ENCODE measurements at regions of chr1 and their contacts with region 1.

Region 1: DNA sequence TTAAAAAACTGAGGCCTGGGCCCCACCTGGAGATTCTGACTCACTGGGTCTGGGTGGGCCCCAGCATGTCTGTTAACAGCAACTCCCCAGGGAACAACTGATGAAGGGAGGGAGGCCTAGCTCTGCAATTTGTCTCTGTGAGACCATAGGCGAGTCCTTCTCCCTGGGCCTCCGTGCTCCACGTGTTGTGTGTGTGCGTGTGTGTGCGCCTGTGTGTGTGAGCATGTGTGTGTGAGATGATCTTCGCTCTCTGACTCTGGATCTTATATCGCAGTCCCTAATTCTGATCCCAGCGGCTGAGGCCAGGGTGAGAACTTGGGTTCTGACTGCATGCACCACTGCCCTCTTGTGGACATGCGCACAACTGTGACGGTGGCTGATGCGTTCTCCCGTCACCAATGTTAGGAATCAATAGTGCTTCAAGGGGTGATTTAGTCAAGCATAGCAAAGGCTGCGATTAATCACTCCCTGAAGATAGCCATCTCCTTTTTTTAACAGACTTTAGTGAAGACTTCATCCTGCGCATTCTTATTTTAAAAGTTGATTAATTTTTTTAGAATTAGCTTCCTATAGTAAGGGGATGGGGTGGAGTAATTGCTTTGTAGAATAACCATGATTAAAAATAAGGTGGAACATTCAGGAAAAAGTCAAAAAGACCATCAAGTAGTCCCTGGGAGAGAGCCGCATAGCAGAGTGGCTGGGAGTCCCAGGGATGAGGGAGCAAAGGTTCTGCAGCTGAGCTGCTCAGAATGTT is 62.4 kb upstream of the USP24 start:
- DNase-seq: peak; percentile 68
- H3K27ac ChIP-seq: no peak overlapping the region
- CTCF ChIP-seq: peak; percentile 80

Region 2: DNA sequence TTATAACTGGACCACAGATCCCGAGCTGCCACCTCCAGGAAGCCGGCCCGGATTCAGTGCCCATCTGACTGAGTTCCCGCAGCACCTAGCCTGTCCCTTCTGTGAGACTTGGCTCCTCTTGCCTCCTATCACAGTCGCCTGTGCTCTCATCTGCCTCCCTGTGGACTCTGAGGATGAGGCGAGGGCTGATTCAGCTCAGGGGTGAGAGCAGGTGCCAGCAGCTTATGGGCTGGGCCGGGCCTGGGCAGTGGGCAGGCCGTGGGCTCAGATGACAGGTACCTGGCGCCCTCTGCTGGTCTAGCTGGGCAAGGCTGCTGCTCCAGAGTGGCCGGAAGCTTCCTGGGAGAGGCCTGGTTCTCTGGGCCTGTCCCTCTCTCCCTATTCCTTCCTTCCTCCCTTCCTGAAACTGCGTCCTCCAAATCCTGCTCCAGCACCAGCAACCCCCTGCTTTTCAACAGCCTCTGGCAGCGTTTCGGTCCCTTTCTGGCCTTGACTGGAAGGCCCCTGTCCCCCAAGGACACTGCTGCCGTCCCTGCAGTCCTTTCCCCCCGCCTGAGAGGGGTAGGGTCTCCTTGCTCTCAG is 255.5 kb before region 1 on chr1:
- CTCF ChIA-PET with region 1: no interaction called
- POLR2A ChIA-PET with region 1: no interaction called
- DNase-seq: peak; percentile 92
- H3K27ac ChIP-seq: peak overlapping the region; percentile 52
- CTCF ChIP-seq: peak; percentile 93

Region 3: DNA sequence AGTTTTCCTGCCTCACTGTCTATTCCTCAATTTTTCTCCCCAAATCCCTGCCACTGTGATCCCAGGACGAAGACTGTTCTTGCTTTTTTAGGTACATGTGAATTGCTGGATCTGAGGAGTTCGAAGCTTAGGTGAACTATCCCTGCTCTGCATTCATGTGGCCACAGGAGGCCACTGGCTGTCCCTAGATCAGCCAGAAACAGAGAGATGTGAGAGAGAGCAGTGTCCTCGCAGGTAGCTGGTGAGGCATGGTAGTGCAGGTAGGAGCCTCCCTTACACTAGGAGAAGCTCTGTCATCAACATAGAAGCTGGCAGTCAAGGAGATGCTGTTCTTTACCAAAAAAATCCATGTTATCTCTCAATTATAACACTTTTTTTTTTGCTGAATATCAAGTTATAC is 133.9 kb before region 1 on chr1:
- CTCF ChIA-PET with region 1: interaction called, 12 read pairs
- POLR2A ChIA-PET with region 1: no interaction called
- DNase-seq: no peak
- H3K27ac ChIP-seq: no peak overlapping the region
- CTCF ChIP-seq: no peak